ENCODE measurements at regions of chr7 and their contacts with region 1.

Region 1: GRCh38 chr7:100889761-100890634 is 483 bp upstream of the UFSP1 start:
- DNase-seq: peak; percentile 82 to 97 (median 90)
- ATAC-seq: peak; percentile 87
- H3K4me3 ChIP-seq: peak overlapping the region; percentile 73
- H3K4me3 Mint-ChIP-seq: peak overlapping the region; percentile 95
- H3K27ac ChIP-seq: peak overlapping the region in 1 of 2 donors; percentile 50
- H3K27ac Mint-ChIP-seq: peak overlapping the region; percentile 66
- H3K4me1 ChIP-seq: peaks cover 68% of the 10 kb centered on the region
- H3K4me1 Mint-ChIP-seq: peaks cover 52% of the 10 kb centered on the region
- H3K27me3 ChIP-seq: peaks cover 24 to 41% of the 10 kb centered on the region in 2 experiments
- H3K27me3 Mint-ChIP-seq: peaks cover 36% of the 10 kb centered on the region
- CTCF ChIP-seq: no peak

Region 2: GRCh38 chr7:100694098-100694745 is 195.8 kb before region 1 on chr7 and contains the start of gene GIGYF1:
- CTCF ChIA-PET with region 1: no interaction called
- POLR2A ChIA-PET with region 1: no interaction called
- intact Hi-C with region 1: no loop called
- DNase-seq: peak; percentile 48 to 89 (median 64)
- ATAC-seq: peak; percentile 72
- H3K4me3 ChIP-seq: peak within 1 kb of the TSS; percentile 75
- H3K4me3 Mint-ChIP-seq: peak within 1 kb of the TSS; percentile 97
- H3K27ac ChIP-seq: peak within 1 kb of the TSS in 1 of 2 donors; percentile 34
- H3K27ac Mint-ChIP-seq: peak within 1 kb of the TSS; percentile 85
- H3K4me1 ChIP-seq: peaks cover 51% of the 10 kb centered on the region
- H3K4me1 Mint-ChIP-seq: peaks cover 27% of the 10 kb centered on the region
- H3K27me3 ChIP-seq: no peaks in the 10 kb centered on the region
- H3K27me3 Mint-ChIP-seq: no peaks in the 10 kb centered on the region
- CTCF ChIP-seq: no peak
- total RNA-seq, gene GIGYF1: 75.5 to 78.8 TPM

Region 3: DNA sequence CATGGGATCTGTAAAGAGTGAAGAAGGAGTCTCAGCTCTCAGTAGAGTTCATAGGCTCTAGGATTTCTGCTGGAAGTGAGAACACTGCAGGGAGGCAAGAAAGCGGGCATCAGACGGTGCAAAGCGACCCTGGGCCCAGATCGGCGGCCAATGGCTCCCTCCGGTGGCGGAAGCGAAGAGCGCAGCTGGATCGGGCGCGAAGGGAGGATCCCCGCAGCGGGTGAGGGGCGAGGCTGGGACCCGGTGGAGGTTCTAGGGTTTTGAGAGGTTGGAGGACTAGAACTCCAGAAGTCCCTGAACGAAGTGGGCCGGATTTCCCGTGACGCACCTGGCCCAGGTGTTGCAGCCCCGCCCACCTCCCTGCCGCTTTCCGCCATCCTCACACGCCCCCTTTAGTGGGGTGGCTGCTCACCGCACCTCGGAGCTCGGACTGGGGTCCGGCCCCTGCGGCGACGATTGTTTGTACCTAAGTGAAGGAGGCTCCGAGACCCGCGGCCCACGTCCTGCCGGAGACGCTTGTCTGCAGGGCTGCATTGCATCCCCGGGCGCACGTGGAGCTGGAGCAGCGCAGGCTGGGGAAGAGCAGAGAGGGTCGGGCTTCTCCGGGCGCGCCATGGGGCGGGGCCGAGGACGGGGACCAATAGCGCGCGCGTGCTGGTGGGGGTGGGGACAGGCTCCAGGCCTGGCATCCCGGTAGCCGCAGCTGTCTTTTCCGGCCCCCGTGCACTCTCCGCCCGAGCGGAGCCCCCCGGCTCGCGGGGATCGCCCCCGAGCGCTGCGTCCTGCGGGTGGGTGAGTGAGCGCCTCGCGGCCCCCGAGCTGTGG is 37.7 kb before region 1 on chr7 and contains the start of gene SLC12A9:
- CTCF ChIA-PET with region 1: interaction called, 11 read pairs
- POLR2A ChIA-PET with region 1: interaction called, 17 read pairs
- intact Hi-C with region 1: no loop called
- DNase-seq: peak; percentile 68 to 92 (median 82)
- ATAC-seq: peak; percentile 91
- H3K4me3 ChIP-seq: peak within 1 kb of the TSS; percentile 72
- H3K4me3 Mint-ChIP-seq: peak within 1 kb of the TSS; percentile 95
- H3K27ac ChIP-seq: peak within 1 kb of the TSS; percentile 36 to 62
- H3K27ac Mint-ChIP-seq: peak within 1 kb of the TSS; percentile 91
- H3K4me1 ChIP-seq: peaks cover 30% of the 10 kb centered on the region
- H3K4me1 Mint-ChIP-seq: peaks cover 23% of the 10 kb centered on the region
- H3K27me3 ChIP-seq: no peaks in the 10 kb centered on the region
- H3K27me3 Mint-ChIP-seq: no peaks in the 10 kb centered on the region
- CTCF ChIP-seq: peak; percentile 96
- total RNA-seq, gene SLC12A9: 26.3 to 28.2 TPM

Region 4: GRCh38 chr7:100949227-100949932 is 59.4 kb after region 1 on chr7 and contains the start of gene MUC3A:
- CTCF ChIA-PET with region 1: no interaction called
- POLR2A ChIA-PET with region 1: no interaction called
- intact Hi-C with region 1: no loop called
- DNase-seq: no peak
- ATAC-seq: no peak
- H3K4me3 ChIP-seq: no peak within 1 kb of the TSS
- H3K4me3 Mint-ChIP-seq: no peak within 1 kb of the TSS
- H3K27ac ChIP-seq: no peak within 1 kb of the TSS
- H3K27ac Mint-ChIP-seq: no peak within 1 kb of the TSS
- H3K4me1 ChIP-seq: peaks cover 5% of the 10 kb centered on the region
- H3K4me1 Mint-ChIP-seq: no peaks in the 10 kb centered on the region
- H3K27me3 ChIP-seq: peaks cover 40 to 45% of the 10 kb centered on the region in 2 experiments
- H3K27me3 Mint-ChIP-seq: peaks cover 32% of the 10 kb centered on the region
- CTCF ChIP-seq: no peak
- total RNA-seq, gene MUC3A: not detected

Region 5: DNA sequence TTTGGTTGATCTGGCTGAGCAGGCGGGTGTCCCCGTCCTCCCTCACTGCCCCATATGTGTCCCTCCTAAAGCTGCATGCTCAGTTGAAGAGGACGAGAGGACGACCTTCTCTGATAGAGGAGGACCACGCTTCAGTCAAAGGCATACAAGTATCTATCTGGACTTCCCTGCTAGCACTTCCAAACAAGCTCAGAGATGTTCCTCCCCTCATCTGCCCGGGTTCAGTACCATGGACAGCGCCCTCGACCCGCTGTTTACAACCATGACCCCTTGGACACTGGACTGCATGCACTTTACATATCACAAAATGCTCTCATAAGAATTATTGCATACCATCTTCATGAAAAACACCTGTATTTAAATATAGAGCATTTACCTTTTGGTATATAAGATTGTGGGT is 168.4 kb after region 1 on chr7:
- CTCF ChIA-PET with region 1: interaction called, 10 read pairs
- POLR2A ChIA-PET with region 1: no interaction called
- intact Hi-C with region 1: no loop called
- DNase-seq: peak; percentile 14 to 68 (median 35)
- ATAC-seq: no peak
- H3K4me3 ChIP-seq: no peak overlapping the region
- H3K4me3 Mint-ChIP-seq: no peak overlapping the region
- H3K27ac ChIP-seq: no peak overlapping the region
- H3K27ac Mint-ChIP-seq: no peak overlapping the region
- H3K4me1 ChIP-seq: peaks cover 3% of the 10 kb centered on the region
- H3K4me1 Mint-ChIP-seq: peaks cover 4% of the 10 kb centered on the region
- H3K27me3 ChIP-seq: peaks cover 29 to 31% of the 10 kb centered on the region in 2 experiments
- H3K27me3 Mint-ChIP-seq: peaks cover 69% of the 10 kb centered on the region
- CTCF ChIP-seq: no peak

Region 6: GRCh38 chr7:101085162-101085987 is 195.4 kb after region 1 on chr7 and contains the start of gene TRIM56:
- CTCF ChIA-PET with region 1: no interaction called
- POLR2A ChIA-PET with region 1: interaction called, 14 read pairs
- intact Hi-C with region 1: no loop called
- DNase-seq: peak; percentile 52 to 88 (median 70)
- ATAC-seq: peak; percentile 90
- H3K4me3 ChIP-seq: peak within 1 kb of the TSS; percentile 99
- H3K4me3 Mint-ChIP-seq: peak within 1 kb of the TSS; percentile 100
- H3K27ac ChIP-seq: peak within 1 kb of the TSS; percentile 91 to 92
- H3K27ac Mint-ChIP-seq: peak within 1 kb of the TSS; percentile 96
- H3K4me1 ChIP-seq: peaks cover 53% of the 10 kb centered on the region
- H3K4me1 Mint-ChIP-seq: peaks cover 28% of the 10 kb centered on the region
- H3K27me3 ChIP-seq: no peaks in the 10 kb centered on the region
- H3K27me3 Mint-ChIP-seq: no peaks in the 10 kb centered on the region
- CTCF ChIP-seq: no peak
- total RNA-seq, gene TRIM56: 29.9 to 31.8 TPM

Region 7: GRCh38 chr7:101217388-101218235 is 327.6 kb after region 1 on chr7 and contains the starts of genes PLOD3 and ZNHIT1:
- CTCF ChIA-PET with region 1: no interaction called
- POLR2A ChIA-PET with region 1: interaction called, 6 read pairs
- intact Hi-C with region 1: loop called in 1 of 2 experiments (anchors 10 kb)
- DNase-seq: peak; percentile 90 to 99 (median 96)
- ATAC-seq: peak; percentile 81
- H3K4me3 ChIP-seq: peak within 1 kb of the TSS; percentile 83
- H3K4me3 Mint-ChIP-seq: peak within 1 kb of the TSS; percentile 95
- H3K27ac ChIP-seq: peak within 1 kb of the TSS; percentile 69 to 90
- H3K27ac Mint-ChIP-seq: peak within 1 kb of the TSS; percentile 87
- H3K4me1 ChIP-seq: peaks cover 47% of the 10 kb centered on the region
- H3K4me1 Mint-ChIP-seq: peaks cover 38% of the 10 kb centered on the region
- H3K27me3 ChIP-seq: no peaks in the 10 kb centered on the region
- H3K27me3 Mint-ChIP-seq: no peaks in the 10 kb centered on the region
- CTCF ChIP-seq: no peak
- total RNA-seq, gene PLOD3: 13.8 to 15.9 TPM
- total RNA-seq, gene ZNHIT1: 28.4 to 30.6 TPM

Measured in CD4-positive, alpha-beta T cell (primary cell).